Transverse colon (tissue), 4 donors: ENCODE measurements at regions of chr1 and their contacts with region 1.

Region 1: DNA sequence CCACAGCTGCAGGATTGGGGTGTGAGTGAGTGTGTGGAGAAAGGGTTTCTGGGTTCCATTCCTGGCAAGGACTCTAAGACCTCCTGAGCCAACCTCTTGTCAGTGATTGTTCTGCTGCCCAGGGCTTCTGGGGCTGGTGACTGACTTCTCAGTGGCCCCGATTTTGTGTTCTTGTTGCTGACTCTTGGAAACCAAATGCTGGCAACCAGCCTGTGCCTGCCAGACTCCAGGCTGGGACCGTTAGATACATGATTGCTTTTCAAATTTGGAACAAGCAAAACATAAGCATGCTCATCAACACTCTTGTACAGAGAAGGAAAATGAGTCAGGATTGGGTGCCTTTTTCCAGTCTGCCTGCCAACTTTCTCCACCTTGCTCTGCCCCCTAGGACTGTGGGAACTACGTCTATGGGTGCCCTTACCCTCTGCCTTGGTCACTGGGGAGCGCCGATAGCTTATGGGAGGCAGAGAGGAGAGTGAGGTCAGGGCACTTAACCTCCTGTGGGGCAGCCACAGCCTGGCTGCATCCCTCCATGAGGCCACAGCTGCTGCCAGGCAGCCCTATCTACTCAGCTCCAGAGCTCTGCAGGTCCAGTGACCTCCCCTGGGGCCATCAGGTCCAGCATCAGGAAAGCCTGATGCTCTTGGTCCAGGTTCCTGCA is 39.3 kb upstream of the EPS8L3 start:
- DNase-seq: no peak
- H3K4me3 ChIP-seq: no peak overlapping the region
- H3K27ac ChIP-seq: peak overlapping the region; percentile 19 to 46 (median 38)
- H3K4me1 ChIP-seq: peaks cover 3 to 30% (median 8%) of the 10 kb centered on the region in 4 donors
- H3K27me3 ChIP-seq: no peaks in the 10 kb centered on the region
- CTCF ChIP-seq: no peak
- EP300 ChIP-seq: no peak
- POLR2A ChIP-seq: no peak

Region 2: DNA sequence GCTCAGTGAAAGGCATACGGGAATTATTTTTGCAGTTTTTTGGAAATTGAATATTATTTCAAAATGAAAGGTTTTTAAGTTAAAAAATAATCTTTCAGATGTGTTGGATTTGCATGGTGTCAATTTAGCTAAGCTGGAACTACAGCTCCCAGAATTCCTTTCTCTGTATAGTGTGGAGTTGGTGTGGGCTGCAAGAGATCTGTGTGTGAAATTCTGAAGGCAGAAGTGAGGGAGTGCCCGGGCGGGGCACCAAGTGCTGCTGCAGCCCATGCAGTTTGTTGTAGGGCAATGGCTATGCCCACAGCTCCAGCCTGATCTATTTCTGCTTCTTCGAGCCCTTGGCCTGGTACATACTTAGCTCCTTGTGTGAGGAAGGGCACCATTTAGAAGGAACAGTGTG is 47.2 kb after region 1 on chr1:
- in situ Hi-C with region 1: no loop called
- intact Hi-C with region 1: loop called (anchors 10 kb)
- DNase-seq: no peak
- H3K4me3 ChIP-seq: no peak overlapping the region
- H3K27ac ChIP-seq: no peak overlapping the region
- H3K4me1 ChIP-seq: no peaks in the 10 kb centered on the region
- H3K27me3 ChIP-seq: no peaks in the 10 kb centered on the region
- CTCF ChIP-seq: no peak
- EP300 ChIP-seq: no peak
- POLR2A ChIP-seq: no peak

Region 3: GRCh38 chr1:109877320-109877771 is 74.3 kb after region 1 on chr1:
- in situ Hi-C with region 1: no loop called
- intact Hi-C with region 1: no loop called
- DNase-seq: peak; percentile 31
- H3K4me3 ChIP-seq: no peak overlapping the region
- H3K27ac ChIP-seq: peak overlapping the region; percentile 79 to 84 (median 81)
- H3K4me1 ChIP-seq: peaks cover 0 to 30% (median 14%) of the 10 kb centered on the region in 4 donors
- H3K27me3 ChIP-seq: no peaks in the 10 kb centered on the region
- CTCF ChIP-seq: peak in 3 of 5 experiments; percentile 12 to 25 (median 21)
- EP300 ChIP-seq: no peak
- POLR2A ChIP-seq: no peak

Region 4: GRCh38 chr1:109984456-109985275 is 181.6 kb after region 1 on chr1 and contains the start of gene AHCYL1:
- in situ Hi-C with region 1: no loop called
- intact Hi-C with region 1: no loop called
- DNase-seq: peak; percentile 100
- H3K4me3 ChIP-seq: peak within 1 kb of the TSS; percentile 69 to 86 (median 84)
- H3K27ac ChIP-seq: peak within 1 kb of the TSS; percentile 93 to 98 (median 96)
- H3K4me1 ChIP-seq: peaks cover 24 to 57% (median 43%) of the 10 kb centered on the region in 4 donors
- H3K27me3 ChIP-seq: no peaks in the 10 kb centered on the region
- CTCF ChIP-seq: peak; percentile 93 to 100 (median 98)
- EP300 ChIP-seq: no peak
- POLR2A ChIP-seq: peak; percentile 99
- total RNA-seq, gene AHCYL1: 31.8 to 71.5 (median 51.3) TPM